ENCODE measurements at regions of chr7 and their contacts with region 1.

Region 1: GRCh38 chr7:156949541-156950380 is at the start of gene NOM1:
- DNase-seq: peak; percentile 80 to 86
- ATAC-seq: peak; percentile 92 to 94
- H3K4me3 ChIP-seq: peak within 1 kb of the TSS; percentile 95
- H3K27ac ChIP-seq: peak within 1 kb of the TSS; percentile 94
- H3K4me1 ChIP-seq: peaks cover 14% of the 10 kb centered on the region; the same call in 2 of the 3 replicates
- CTCF ChIP-seq: peak; percentile 89
- EP300 ChIP-seq: no peak
- POLR2A ChIP-seq: peak; percentile 69
- RAD21 ChIP-seq: peak; percentile 11 to 39; a peak in 4 of 5 replicates
- polyA plus RNA-seq, gene NOM1: 15.5 and 19.1 TPM in 2 replicates

Region 2: DNA sequence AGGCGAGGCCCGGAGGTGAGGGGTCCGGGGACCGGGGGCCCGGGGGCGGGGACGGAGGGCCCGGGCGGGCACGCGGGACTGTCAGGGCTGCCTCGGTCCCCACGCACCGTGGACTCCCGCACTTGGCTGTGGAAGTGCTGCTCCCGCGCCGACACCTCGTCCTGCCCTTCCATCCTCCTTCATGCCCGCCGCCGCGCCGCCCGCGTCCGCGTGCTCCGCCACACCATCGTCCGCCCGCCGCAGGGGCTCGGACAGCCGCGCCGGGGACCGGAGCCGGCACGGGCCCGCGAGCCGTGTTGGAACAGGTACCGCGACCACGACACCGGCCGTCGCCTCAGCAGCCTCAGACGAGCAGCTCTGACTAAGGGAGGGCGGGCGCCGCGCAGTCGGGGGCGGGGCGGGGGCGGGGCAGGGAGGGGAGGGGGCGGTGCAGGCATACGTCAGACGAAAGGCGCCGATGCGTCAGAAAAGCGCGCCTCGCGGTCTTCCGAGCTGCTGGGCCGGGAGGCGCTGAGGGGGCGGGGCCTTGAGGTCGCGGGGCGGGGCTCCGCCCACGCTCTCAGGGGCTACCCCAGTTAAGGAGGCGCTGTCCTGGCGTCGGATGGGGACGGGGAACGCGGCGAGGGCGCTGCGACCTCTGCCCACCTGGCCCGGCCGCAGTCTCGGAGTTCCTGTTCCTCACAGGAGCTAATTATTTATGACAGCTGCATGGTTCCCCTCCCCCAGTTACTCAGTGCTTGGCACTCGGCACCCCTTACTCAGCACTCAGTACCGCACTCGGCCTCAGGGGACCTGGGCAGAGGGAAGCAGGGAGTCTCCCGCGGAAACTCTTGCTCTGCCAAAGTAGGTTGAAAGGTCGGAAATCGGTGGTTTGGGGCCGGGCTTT is 56.7 kb before region 1 on chr7 and contains the start of gene LMBR1:
- CTCF ChIA-PET with region 1: interaction called, 10 read pairs
- POLR2A ChIA-PET with region 1: interaction called, 12 read pairs
- DNase-seq: peak; percentile 95 to 96
- ATAC-seq: peak; percentile 86 to 92
- H3K4me3 ChIP-seq: peak within 1 kb of the TSS; percentile 97
- H3K27ac ChIP-seq: peak within 1 kb of the TSS; percentile 87 to 98
- H3K4me1 ChIP-seq: peaks cover 16% of the 10 kb centered on the region
- CTCF ChIP-seq: no peak
- EP300 ChIP-seq: no peak
- POLR2A ChIP-seq: peak; percentile 88
- RAD21 ChIP-seq: no peak
- polyA plus RNA-seq, gene LMBR1: 33.2 and 39.3 TPM in 2 replicates

Region 3: GRCh38 chr7:156906200-156906649 is 43.5 kb before region 1 on chr7:
- CTCF ChIA-PET with region 1: interaction called, 12 read pairs
- POLR2A ChIA-PET with region 1: no interaction called
- DNase-seq: no peak
- ATAC-seq: no peak
- H3K4me3 ChIP-seq: no peak overlapping the region
- H3K27ac ChIP-seq: no peak overlapping the region; a peak in 1 of 6 replicates
- H3K4me1 ChIP-seq: peaks cover 13% of the 10 kb centered on the region
- CTCF ChIP-seq: no peak
- EP300 ChIP-seq: no peak
- POLR2A ChIP-seq: no peak
- RAD21 ChIP-seq: no peak

Region 4: DNA sequence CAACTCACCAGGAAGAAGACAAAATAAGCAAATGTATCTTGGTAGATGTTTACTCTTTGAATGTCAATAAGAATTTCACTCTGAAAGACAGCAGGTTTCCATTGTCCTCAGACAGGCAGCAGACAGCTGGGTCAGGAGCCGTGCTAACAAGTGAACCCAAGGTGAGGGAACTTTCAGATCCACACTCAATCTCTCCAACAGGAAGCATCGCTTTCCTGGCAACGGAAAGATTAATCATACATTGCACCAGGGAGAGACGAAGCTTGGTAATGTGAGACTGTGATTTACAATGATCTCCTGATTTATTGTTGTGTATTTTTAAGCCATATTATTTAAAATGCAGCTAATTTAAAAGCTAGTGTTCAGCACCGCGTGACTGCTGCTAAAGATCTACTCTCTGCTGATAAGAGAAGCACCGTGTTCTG is 17.8 kb before region 1 on chr7:
- CTCF ChIA-PET with region 1: interaction called, 13 read pairs
- POLR2A ChIA-PET with region 1: interaction called, 3 read pairs
- DNase-seq: peak; percentile 36 to 58
- ATAC-seq: peak; percentile 60 to 78; a peak in 4 of 6 replicates
- H3K4me3 ChIP-seq: no peak overlapping the region
- H3K27ac ChIP-seq: peak overlapping the region; percentile 6 to 25; a peak in 3 of 6 replicates
- H3K4me1 ChIP-seq: peaks cover 7% of the 10 kb centered on the region
- CTCF ChIP-seq: no peak
- EP300 ChIP-seq: no peak
- POLR2A ChIP-seq: no peak
- RAD21 ChIP-seq: no peak

Region 5: GRCh38 chr7:156962145-156962544 is 12.4 kb after region 1 on chr7:
- CTCF ChIA-PET with region 1: interaction called, 42 read pairs
- POLR2A ChIA-PET with region 1: no interaction called
- DNase-seq: no peak
- ATAC-seq: no peak
- H3K4me3 ChIP-seq: no peak overlapping the region
- H3K27ac ChIP-seq: no peak overlapping the region
- H3K4me1 ChIP-seq: no peaks in the 10 kb centered on the region
- CTCF ChIP-seq: no peak
- EP300 ChIP-seq: no peak
- POLR2A ChIP-seq: no peak
- RAD21 ChIP-seq: no peak

Region 6: DNA sequence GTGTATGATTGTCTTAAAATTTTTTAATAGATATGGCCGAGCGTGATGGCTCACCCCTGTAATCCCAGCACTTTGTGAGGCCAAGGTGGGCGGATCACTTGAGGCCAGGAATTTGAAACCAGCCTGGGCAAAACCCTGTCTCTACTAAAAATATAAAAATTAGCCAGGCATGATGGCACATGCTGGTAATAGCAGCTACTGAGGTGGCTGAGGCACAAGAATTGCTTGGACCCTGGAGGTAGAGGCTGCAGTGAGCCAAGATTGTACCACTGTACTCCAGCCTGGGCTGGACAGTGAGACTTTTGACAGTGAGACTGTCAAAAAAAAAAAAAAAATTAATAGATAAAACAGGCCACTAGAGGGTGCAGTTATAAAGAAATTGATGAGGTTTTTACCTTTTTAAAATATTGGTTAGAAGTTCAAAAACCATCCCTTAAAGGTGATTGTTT is 20.2 kb after region 1 on chr7:
- CTCF ChIA-PET with region 1: interaction called, 42 read pairs
- POLR2A ChIA-PET with region 1: no interaction called
- DNase-seq: no peak
- ATAC-seq: peak in 1 of 2 experiments; percentile 79; a peak in 3 of 6 replicates
- H3K4me3 ChIP-seq: no peak overlapping the region
- H3K27ac ChIP-seq: no peak overlapping the region
- H3K4me1 ChIP-seq: no peaks in the 10 kb centered on the region
- CTCF ChIP-seq: peak; percentile 60
- EP300 ChIP-seq: no peak
- POLR2A ChIP-seq: no peak
- RAD21 ChIP-seq: peak; percentile 48 to 54; a peak in 4 of 5 replicates

Region 7: DNA sequence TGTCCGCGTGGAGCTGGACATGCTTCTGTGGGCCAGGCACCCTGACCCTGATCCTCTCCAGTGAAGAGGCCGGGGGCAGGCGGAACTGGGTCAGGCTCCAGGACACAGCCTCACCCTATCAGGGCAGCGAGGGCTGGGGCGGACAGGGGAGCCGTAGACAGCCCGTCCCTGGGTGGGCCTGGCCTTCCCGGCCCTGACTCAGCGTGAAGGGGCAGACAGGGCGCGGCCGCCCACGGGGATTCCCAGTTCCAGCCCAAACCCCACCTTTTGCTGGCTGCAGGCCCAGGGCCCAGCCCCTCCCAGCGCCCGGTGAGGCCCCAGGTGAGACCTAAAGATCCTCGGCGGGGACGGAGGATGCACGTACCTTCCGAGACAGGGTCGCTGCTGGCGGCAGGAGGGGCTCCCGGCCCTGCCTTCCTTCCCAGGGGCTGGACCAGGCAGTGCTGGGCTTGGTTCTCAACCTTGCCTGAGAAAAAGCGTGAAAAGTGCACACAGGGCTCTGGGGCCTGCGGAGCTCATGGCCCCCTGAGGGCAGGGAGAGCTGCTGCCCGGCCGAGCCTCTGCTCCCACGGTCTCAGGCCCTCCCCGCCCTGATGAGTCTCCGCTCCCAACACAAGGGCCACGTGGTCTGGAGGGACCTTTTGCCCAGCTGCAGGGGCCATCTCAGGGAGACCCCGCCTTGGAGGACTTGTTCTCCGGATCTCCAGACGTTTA is 343.1 kb after region 1 on chr7:
- CTCF ChIA-PET with region 1: no interaction called
- POLR2A ChIA-PET with region 1: no interaction called
- DNase-seq: peak in 1 of 2 experiments; percentile 53
- ATAC-seq: peak; percentile 39 to 79; a peak in 5 of 6 replicates
- H3K4me3 ChIP-seq: no peak overlapping the region
- H3K27ac ChIP-seq: peak overlapping the region; percentile 43 to 73; a peak in 5 of 6 replicates
- H3K4me1 ChIP-seq: peaks cover 12% of the 10 kb centered on the region; the same call in 2 of the 3 replicates
- CTCF ChIP-seq: no peak
- EP300 ChIP-seq: no peak
- POLR2A ChIP-seq: no peak
- RAD21 ChIP-seq: no peak